Posterior vena cava (tissue), 2 donors: ENCODE measurements at regions of chr17 and their contacts with region 1.

Region 1: DNA sequence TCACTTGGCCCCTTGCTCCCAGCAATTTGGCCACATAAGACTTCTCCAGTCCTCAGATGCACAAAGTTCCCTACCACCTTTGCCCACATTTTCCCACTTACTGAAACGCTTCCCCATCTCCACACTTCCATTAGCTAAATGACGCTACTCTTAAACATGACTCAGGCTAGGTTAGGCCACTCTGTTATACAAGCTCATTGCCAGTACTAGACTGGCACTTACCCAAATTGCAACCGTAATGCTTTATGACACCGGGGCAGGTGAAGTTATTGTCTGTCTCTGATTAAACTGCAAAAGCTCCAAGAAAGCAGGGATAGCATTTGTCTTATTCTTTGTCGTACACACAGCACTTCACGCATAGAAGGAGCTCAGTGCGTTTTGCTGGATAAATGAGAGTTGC is 29.2 kb downstream of the ASPA start:
- DNase-seq: no peak

Region 2: DNA sequence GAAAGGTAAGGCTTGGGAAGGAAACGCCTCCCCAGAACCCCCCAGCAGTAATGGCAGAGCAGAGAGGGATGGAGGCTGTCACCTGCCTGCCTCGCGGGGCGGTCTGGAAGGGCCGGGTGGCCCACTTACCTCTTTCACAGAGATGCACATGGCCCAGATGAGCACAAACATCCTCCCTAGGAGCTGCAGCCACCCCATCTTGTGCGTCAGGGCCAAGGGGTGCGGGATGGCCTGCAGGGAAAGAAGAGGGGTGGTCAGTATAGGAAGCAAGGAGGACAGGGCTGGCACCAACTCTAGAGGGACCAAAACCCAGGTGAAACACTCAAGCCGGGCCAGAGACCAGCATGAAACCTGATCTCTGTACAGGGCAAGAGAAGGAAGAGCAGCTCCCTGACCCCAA is 22.9 kb after region 1 on chr17:
- intact Hi-C with region 1: loop called in 1 of 2 experiments (anchors 1 kb)
- DNase-seq: peak; percentile 59